Aorta (tissue), 5 donors: ENCODE measurements at regions of chr5 and their contacts with region 1.

Region 1: GRCh38 chr5:179060116-179061008 is at the start of gene ZNF354C:
- DNase-seq: peak; percentile 92 to 97
- ATAC-seq: peak; percentile 95
- H3K4me3 ChIP-seq: peak within 1 kb of the TSS; percentile 74
- H3K27ac ChIP-seq: peak within 1 kb of the TSS in 1 of 2 donors; percentile 66
- H3K4me1 ChIP-seq: no peaks in the 10 kb centered on the region
- H3K27me3 ChIP-seq: no peaks in the 10 kb centered on the region
- total RNA-seq, gene ZNF354C: 6.3 to 10.2 TPM

Region 2: GRCh38 chr5:178602752-178603151 is 457.6 kb before region 1 on chr5:
- intact Hi-C with region 1: no loop called
- DNase-seq: no peak
- ATAC-seq: no peak
- H3K4me3 ChIP-seq: no peak overlapping the region
- H3K27ac ChIP-seq: no peak overlapping the region
- H3K4me1 ChIP-seq: no peaks in the 10 kb centered on the region
- H3K27me3 ChIP-seq: no peaks in the 10 kb centered on the region

Region 3: DNA sequence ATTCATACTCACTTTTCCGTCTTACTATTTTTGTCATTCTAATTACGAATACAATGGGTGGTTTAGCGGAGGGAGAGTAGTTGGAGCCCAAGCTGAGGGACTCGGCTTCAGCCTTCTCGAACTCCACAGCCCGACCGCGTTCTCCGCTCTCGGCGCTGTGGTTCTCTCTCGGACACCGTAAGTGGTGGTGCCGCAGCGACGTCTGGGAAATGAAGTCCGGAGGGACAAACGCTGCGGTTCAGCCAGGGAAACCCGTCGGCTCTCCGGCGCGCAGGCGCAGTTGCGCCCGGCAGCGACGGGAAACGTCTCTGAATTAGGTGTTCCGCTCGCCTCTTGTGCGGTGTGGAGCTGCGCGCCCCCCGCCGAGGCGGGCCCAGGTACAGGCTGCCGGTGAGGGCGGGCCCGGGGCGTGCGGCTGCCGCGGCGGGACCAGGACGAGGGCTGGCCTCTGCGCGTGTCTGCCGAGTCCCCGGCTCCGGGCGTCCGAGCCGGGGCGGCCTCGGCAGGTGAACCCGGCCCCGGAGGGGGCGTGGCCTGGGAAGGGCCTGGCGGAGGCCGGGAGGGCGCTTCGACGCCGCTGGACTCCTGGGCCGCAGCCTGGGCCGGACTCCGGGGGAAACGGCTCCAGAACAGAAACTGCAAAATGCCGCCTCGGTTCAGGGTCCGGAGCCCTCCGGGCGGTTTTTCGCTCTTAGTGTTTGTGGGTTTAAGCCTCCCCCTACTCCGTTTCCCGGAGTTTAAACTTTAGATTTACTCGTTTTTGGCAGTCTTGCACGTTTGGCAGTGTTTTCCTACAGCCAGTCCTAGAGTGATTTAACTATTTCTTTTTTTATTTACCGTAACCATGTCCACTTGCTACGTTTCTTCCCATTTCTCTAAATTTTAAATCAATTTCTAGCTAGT is 36.6 kb before region 1 on chr5 and contains the start of gene ZNF879:
- intact Hi-C with region 1: loop called in 1 of 2 experiments (anchors 2 kb)
- DNase-seq: peak; percentile 96 to 97
- ATAC-seq: peak; percentile 96
- H3K4me3 ChIP-seq: peak within 1 kb of the TSS; percentile 86 to 99
- H3K27ac ChIP-seq: peak within 1 kb of the TSS in 1 of 2 donors; percentile 88
- H3K4me1 ChIP-seq: no peaks in the 10 kb centered on the region
- H3K27me3 ChIP-seq: no peaks in the 10 kb centered on the region
- total RNA-seq, gene ZNF879: 5.7 to 6.1 TPM